Lower leg skin (tissue), 4 donors: ENCODE measurements at regions of chr2 and their contacts with region 1.

Region 1: GRCh38 chr2:215969131-215969841 is 44.1 kb downstream of the MREG start:
- DNase-seq: no peak
- H3K4me3 ChIP-seq: no peak overlapping the region
- CTCF ChIP-seq: no peak
- POLR2A ChIP-seq: no peak

Region 2: GRCh38 chr2:215811409-215812345 is 157.6 kb before region 1 on chr2:
- intact Hi-C with region 1: no loop called
- DNase-seq: no peak
- H3K4me3 ChIP-seq: no peak overlapping the region
- CTCF ChIP-seq: no peak
- POLR2A ChIP-seq: no peak

Region 3: DNA sequence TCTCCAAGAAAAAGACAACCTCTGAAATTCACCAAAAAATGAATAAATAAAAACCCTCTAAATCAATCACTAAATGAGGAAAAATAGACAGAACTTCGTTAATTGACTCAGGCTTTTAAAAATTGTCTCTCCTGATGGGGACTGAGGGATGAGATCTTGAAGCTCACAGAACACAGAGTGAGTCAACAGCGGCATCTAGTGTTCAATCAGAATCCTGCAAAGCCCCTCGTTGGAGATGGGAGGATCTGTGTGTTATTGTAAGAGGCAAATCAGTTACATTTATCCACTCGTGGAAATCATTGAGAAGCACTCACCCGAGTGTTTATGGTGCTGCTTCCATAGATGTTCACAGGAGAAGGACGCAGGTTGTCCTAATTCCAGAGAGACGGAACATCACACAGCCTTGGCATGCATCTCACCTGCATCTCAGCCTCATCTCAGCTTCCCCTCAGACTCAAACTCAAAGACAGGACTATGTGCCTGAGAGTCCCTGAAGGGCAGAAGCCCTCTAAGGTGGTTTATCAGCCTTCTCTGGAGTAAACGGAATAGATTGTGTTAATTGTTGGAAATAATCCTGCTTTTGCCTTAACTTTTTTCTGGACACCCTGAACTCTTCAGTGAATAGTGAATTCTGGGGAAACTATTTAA is 37.9 kb before region 1 on chr2:
- intact Hi-C with region 1: no loop called
- DNase-seq: peak; percentile 69 to 85
- H3K4me3 ChIP-seq: no peak overlapping the region
- CTCF ChIP-seq: peak in 1 of 3 donors; percentile 40
- POLR2A ChIP-seq: no peak

Region 4: GRCh38 chr2:216648105-216648504 is 678.8 kb after region 1 on chr2:
- intact Hi-C with region 1: loop called (anchors 5 kb)
- DNase-seq: no peak
- H3K4me3 ChIP-seq: no peak overlapping the region
- CTCF ChIP-seq: no peak
- POLR2A ChIP-seq: no peak